Left cardiac atrium (tissue), 4 donors: ENCODE measurements at regions of chr18 and their contacts with region 1.

Region 1: DNA sequence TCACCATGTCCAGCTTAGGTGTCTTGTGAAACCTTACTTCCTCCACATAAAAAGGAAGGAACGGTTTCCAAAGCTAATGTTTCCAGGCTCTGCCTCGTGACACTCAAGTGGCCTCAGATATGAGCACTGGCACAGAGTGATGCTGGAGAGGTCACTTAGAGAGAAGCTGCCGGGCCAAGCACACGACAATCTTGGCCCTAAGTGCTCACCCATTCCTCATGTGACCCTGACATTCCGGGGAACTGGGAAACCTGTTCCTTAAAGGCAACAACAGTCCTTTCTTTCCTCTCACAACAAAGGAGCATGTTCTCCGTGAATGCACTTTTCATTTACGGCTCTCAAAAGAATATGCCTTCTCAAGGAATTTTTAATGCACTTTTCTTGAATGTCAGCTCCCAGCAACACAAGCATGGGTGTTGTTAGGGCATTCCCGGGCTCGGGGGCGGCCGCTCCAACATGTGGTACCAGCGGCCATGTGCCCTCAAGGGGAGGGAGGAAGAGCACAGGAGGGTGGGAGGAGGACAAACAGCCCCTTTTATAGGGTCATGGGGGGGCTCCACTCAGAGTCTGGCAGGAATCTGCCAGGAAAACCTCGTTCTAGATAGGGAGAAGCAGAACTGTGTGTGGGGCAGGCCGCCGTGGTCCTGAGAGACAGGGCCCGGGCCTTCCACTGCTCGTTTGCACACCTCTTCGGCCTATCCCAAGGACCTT is 118.6 kb downstream of the MBP start:
- DNase-seq: peak; percentile 63
- ATAC-seq: peak; percentile 89 to 91

Region 2: GRCh38 chr18:77132371-77133050 is 118.5 kb after region 1 on chr18 and contains the start of gene MBP:
- intact Hi-C with region 1: loop called in 1 of 2 experiments (anchors 10 kb)
- DNase-seq: peak; percentile 64
- ATAC-seq: peak; percentile 67 to 70
- total RNA-seq, gene MBP: 21.7 to 24.7 TPM